ENCODE measurements at regions of chr6 and their contacts with region 1.

Region 1: DNA sequence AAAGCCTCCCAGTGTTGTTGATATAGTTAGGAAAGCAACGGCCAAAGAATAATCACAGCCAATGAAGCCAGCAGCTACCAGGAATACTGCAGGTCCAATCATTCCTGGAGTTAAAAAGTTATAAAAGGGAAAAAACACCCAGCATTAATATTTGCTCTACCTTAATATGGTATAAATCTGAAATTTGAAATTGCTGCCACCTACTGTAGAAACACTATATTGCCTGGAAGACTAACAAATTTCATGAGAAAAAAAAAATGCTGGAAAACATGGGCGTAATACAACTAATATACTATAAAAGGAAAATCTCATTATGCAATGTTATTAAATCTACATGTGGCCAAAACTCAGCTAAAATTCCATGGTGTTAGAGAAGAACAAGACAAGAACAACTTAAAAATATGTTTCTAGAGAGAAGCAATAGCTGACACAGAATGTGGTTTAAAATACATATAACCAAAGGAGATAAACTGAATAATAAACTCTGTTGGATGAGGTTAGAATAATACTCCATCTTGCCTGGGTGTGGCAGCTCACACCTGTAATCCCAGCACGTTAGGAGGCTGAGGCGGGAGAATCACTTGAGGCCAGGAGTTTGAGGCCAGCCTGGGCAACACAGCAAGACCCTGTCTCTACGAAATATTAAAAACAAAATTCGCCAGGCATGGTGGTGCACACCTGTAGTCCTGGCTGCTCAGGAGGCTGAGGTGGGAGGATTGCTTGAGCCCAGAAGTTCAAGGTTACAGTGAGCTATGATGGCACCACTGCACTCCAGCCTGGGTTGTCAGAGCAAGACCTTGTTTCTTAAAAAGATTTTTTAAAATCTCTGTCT is 43.1 kb downstream of the SLC17A5 start:
- H3K4me3 ChIP-seq: no peak overlapping the region
- H3K27ac ChIP-seq: no peak overlapping the region
- H3K4me1 ChIP-seq: no peaks in the 10 kb centered on the region
- CTCF ChIP-seq: no peak

Region 2: GRCh38 chr6:73491377-73491776 is 119.3 kb before region 1 on chr6:
- CTCF ChIA-PET with region 1: interaction called, 10 read pairs
- POLR2A ChIA-PET with region 1: no interaction called
- H3K4me3 ChIP-seq: no peak overlapping the region
- H3K27ac ChIP-seq: no peak overlapping the region
- H3K4me1 ChIP-seq: no peaks in the 10 kb centered on the region
- CTCF ChIP-seq: no peak

Region 3: DNA sequence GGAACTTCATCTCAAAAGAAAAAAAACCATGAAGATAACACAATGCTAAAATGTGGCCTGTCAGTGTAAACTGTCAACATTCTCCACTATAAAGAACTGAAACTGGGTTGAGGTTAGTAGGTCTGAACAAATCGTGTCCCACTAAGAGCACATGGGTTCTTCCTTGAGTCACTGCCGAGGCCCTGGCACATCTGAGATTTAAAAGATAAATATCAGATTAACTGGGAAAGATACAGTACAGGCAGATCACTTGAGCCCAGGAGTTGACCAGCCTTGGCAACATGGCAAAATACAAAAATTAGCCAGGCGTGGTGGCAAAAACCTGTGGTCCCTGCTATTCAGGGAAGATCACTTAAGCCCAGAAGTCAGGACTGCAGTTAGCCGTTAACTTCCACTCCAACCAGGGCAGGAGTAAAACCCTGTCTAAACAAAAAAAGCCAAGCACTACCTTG is 95.4 kb before region 1 on chr6:
- CTCF ChIA-PET with region 1: interaction called, 98 read pairs
- POLR2A ChIA-PET with region 1: interaction called, 16 read pairs
- H3K4me3 ChIP-seq: no peak overlapping the region
- H3K27ac ChIP-seq: no peak overlapping the region
- H3K4me1 ChIP-seq: no peaks in the 10 kb centered on the region
- CTCF ChIP-seq: no peak

Region 4: GRCh38 chr6:73548458-73549446 is 61.9 kb before region 1 on chr6:
- CTCF ChIA-PET with region 1: interaction called, 17 read pairs
- POLR2A ChIA-PET with region 1: no interaction called
- H3K4me3 ChIP-seq: no peak overlapping the region
- H3K27ac ChIP-seq: no peak overlapping the region
- H3K4me1 ChIP-seq: no peaks in the 10 kb centered on the region
- CTCF ChIP-seq: no peak

Region 5: GRCh38 chr6:73624896-73625295 is 14.2 kb after region 1 on chr6:
- CTCF ChIA-PET with region 1: interaction called, 15 read pairs
- POLR2A ChIA-PET with region 1: interaction called, 3 read pairs
- H3K4me3 ChIP-seq: no peak overlapping the region
- H3K27ac ChIP-seq: no peak overlapping the region
- H3K4me1 ChIP-seq: no peaks in the 10 kb centered on the region
- CTCF ChIP-seq: no peak

Region 6: DNA sequence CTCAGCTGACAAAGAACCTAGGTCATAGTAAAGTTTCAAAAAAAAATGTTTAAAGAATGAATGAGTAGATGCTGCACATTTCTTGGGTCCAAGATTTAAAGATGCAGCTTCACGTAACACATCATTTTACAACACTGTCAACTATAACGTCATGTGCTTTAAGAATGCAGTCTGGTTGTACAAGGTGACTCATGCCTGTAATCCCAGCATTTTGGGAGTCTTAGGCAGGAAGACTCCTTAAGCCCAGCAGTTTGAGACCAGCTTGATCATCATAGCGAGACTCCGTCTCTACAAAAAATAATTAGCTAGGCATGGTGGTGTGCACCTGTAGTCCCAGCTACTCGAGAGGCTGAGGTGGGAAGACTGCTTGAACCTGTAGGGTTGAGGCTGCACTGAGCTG is 21.2 kb after region 1 on chr6:
- CTCF ChIA-PET with region 1: interaction called, 12 read pairs
- POLR2A ChIA-PET with region 1: no interaction called
- H3K4me3 ChIP-seq: no peak overlapping the region
- H3K27ac ChIP-seq: no peak overlapping the region
- H3K4me1 ChIP-seq: no peaks in the 10 kb centered on the region
- CTCF ChIP-seq: no peak

Region 7: DNA sequence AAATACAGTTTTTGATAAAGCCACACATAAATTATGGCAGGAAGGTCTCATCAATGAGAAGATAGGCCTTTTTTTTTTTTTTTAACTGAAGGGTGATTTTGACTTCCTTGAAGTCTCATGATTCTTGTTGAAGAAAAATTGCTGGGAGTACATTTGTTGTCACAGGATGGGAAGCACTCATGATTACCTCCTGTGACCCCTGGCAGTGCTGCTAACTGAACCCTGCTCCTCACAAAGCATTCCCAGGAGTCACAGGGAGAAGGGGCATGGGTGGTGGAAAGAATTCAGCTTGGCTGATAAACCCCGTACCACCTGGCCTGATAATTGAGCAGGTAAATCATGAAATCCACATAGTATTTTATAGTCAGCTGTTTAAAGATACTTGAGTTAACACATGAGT is 172.3 kb after region 1 on chr6:
- CTCF ChIA-PET with region 1: no interaction called
- POLR2A ChIA-PET with region 1: no interaction called
- H3K4me3 ChIP-seq: no peak overlapping the region
- H3K27ac ChIP-seq: no peak overlapping the region
- H3K4me1 ChIP-seq: no peaks in the 10 kb centered on the region
- CTCF ChIP-seq: no peak

Region 8: DNA sequence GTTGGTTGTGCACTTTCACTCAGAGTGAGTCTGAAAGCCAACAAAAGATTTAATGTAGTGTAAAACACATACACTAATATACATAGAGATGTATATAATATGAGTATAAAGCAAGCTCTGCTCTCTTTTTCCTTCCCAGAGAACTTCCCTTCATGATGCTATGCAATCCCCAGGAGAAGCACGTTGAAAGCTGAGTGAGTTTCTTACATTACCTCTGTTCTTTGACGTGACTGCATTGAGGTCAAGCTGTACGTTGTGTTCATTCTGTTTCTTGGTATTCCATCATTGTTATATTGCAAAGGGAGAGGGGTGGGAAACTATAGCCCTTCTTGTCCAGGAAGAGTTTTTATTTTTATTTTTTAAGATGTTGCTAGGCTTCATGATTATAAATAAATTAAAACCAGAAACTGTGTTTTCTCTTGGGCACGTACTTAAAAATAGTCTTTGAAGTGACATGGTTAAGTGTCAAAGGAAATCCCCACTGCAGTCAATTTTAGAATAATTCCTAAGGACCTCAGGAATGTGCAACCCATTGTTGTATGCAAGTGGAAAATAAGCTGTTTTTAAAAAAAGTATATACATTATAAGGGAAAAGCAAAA is 736.4 kb after region 1 on chr6:
- CTCF ChIA-PET with region 1: no interaction called
- POLR2A ChIA-PET with region 1: no interaction called
- H3K4me3 ChIP-seq: no peak overlapping the region
- H3K27ac ChIP-seq: no peak overlapping the region
- H3K4me1 ChIP-seq: no peaks in the 10 kb centered on the region
- CTCF ChIP-seq: no peak